GM12878 (cell line): ENCODE measurements at regions of chr5 and their contacts with region 1.

Region 1: GRCh38 chr5:69271376-69271775 is 36.7 kb downstream of the CDK7 start:
- DNase-seq: no peak
- ATAC-seq: no peak
- H3K4me3 ChIP-seq: no peak overlapping the region
- H3K27ac ChIP-seq: no peak overlapping the region
- H3K4me1 ChIP-seq: no peaks in the 10 kb centered on the region
- H3K27me3 ChIP-seq: no peaks in the 10 kb centered on the region
- CTCF ChIP-seq: no peak
- EP300 ChIP-seq: no peak
- POLR2A ChIP-seq: no peak
- RAD21 ChIP-seq: no peak

Region 2: DNA sequence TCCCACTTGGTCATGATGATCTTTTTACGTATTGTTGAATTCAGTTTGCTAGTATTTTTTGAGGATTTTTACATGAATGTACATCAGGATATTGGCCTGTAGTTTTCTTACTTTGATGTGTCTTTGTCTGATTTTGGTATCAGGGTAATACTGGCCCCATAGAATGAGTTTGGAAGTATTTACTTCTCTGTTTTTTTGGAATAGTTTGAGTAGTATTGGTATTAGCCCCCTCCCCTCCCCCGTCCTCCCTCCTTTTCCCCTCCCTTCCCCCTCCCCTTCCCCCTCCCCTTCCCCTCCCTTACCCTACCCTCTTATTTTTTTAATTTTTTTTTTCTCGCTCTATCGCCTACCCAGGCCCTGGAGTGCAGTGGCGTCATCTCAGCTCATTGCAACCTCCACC is 26.3 kb before region 1 on chr5:
- CTCF ChIA-PET with region 1: no interaction called
- POLR2A ChIA-PET with region 1: no interaction called
- RAD21 ChIA-PET with region 1: no interaction called
- SMC1A ChIA-PET with region 1: no interaction called
- in situ Hi-C with region 1: no loop called
- intact Hi-C with region 1: no loop called
- DNase-seq: no peak
- ATAC-seq: no peak
- H3K4me3 ChIP-seq: no peak overlapping the region
- H3K27ac ChIP-seq: no peak overlapping the region
- H3K4me1 ChIP-seq: no peaks in the 10 kb centered on the region
- H3K27me3 ChIP-seq: no peaks in the 10 kb centered on the region
- CTCF ChIP-seq: no peak
- EP300 ChIP-seq: no peak
- POLR2A ChIP-seq: no peak
- RAD21 ChIP-seq: no peak

Region 3: DNA sequence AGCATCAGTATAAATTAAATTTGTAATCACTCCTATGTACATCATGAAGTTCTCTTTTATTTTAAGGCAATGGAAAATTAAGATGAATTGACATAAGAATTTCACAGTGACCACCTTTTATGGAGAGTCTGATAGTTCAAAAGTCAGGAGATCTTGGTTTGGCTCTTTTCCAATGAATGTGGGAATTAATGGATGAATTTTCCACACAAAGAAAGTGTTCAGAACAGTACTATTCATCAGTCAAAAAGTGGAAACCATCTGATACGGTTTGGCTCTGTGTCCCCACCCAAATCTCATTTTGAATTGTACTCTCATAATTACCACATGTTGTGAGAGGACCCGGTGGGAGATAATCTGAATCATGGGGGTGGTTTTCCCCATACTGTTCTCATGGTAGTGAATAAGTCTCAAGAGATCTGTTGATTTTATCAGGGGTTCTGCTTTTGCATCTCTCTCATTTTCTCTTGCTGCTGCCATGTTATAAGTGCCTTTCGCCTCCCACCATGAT is 36.7 kb after region 1 on chr5:
- CTCF ChIA-PET with region 1: no interaction called
- POLR2A ChIA-PET with region 1: no interaction called
- RAD21 ChIA-PET with region 1: no interaction called
- SMC1A ChIA-PET with region 1: no interaction called
- in situ Hi-C with region 1: no loop called
- intact Hi-C with region 1: no loop called
- DNase-seq: no peak
- ATAC-seq: no peak
- H3K4me3 ChIP-seq: no peak overlapping the region
- H3K27ac ChIP-seq: no peak overlapping the region
- H3K4me1 ChIP-seq: no peaks in the 10 kb centered on the region
- H3K27me3 ChIP-seq: no peaks in the 10 kb centered on the region
- CTCF ChIP-seq: no peak
- EP300 ChIP-seq: no peak
- POLR2A ChIP-seq: no peak
- RAD21 ChIP-seq: no peak

Region 4: DNA sequence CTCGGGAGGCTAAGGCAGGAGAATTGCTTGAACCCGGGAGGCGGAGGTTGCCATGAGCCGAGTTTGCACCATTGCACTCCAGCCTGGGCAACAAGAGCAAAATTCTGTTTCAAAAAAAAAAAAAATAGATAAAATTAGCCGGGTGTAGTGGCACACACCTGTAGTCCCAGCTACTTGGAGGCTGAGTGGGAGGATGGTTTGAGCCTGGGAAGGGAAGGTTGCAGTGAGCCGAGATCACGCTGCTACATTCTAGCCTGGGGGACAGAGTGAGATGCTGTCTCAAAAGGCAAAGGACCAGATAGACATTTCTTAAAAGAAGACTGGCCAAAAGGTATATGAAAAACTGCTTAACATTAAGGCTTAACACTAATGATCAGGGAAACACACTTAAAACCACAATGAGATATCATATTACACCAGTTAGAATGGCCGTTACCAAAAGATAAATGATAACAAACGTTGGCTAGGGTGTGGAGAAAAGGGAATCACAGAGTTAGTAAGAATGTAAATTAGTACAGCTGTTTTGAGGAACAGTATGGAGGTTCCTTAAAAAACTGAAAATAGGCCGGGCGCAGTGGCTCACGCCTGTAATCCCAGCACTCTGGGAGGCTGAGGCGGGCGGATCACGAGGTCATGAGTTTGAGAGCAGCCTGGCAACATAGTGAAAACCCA is 133.4 kb after region 1 on chr5:
- CTCF ChIA-PET with region 1: no interaction called
- POLR2A ChIA-PET with region 1: interaction called, 4 read pairs
- RAD21 ChIA-PET with region 1: no interaction called
- SMC1A ChIA-PET with region 1: no interaction called
- in situ Hi-C with region 1: no loop called
- intact Hi-C with region 1: loop called (anchors 10 kb)
- DNase-seq: no peak
- ATAC-seq: no peak
- H3K4me3 ChIP-seq: no peak overlapping the region
- H3K27ac ChIP-seq: no peak overlapping the region
- H3K4me1 ChIP-seq: no peaks in the 10 kb centered on the region
- H3K27me3 ChIP-seq: no peaks in the 10 kb centered on the region
- CTCF ChIP-seq: no peak
- EP300 ChIP-seq: no peak
- POLR2A ChIP-seq: no peak
- RAD21 ChIP-seq: no peak